A549 (cell line): ENCODE measurements at regions of chr15 and their contacts with region 1.

Region 1: GRCh38 chr15:64046347-64047153 is at the start of gene DAPK2:
- DNase-seq: peak; percentile 66 to 98
- ATAC-seq: peak; percentile 83 to 91
- H3K4me3 ChIP-seq: peak within 1 kb of the TSS; percentile 64
- H3K27ac ChIP-seq: peak within 1 kb of the TSS; percentile 73 to 94
- H3K4me1 ChIP-seq: peaks cover 33% of the 10 kb centered on the region
- CTCF ChIP-seq: peak; percentile 99
- EP300 ChIP-seq: no peak
- POLR2A ChIP-seq: peak; percentile 37; the same call in 1 of the 2 replicates
- RAD21 ChIP-seq: peak; percentile 63 to 95
- polyA plus RNA-seq, gene DAPK2: 4.2 and 4.8 TPM in 2 replicates

Region 2: DNA sequence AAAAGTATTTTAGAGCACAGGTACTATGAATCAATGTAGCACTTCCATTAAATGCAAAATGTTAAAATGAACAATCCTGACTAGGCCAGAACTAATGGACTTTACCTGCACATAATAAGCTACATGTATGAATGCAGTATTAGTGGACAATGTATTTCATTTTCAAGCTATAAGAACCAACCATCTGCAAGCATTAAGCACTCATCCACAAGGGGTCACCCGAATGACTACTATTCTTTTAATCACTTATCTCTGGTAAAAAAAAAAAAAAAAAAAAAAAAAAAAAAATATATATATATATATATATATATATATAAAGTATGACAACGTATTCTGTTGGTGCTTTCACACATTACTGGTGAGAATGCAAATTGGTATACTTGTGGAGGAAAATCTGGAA is 220.0 kb before region 1 on chr15:
- CTCF ChIA-PET with region 1: interaction called, 12 read pairs
- POLR2A ChIA-PET with region 1: no interaction called
- DNase-seq: peak in 1 of 2 experiments; percentile 62
- ATAC-seq: peak in 1 of 2 experiments; percentile 45; a peak in 1 of 6 replicates
- H3K4me3 ChIP-seq: no peak overlapping the region
- H3K27ac ChIP-seq: no peak overlapping the region
- H3K4me1 ChIP-seq: no peaks in the 10 kb centered on the region
- CTCF ChIP-seq: peak; percentile 22; the same call in 1 of the 3 replicates
- EP300 ChIP-seq: no peak
- POLR2A ChIP-seq: no peak
- RAD21 ChIP-seq: peak in 1 of 2 experiments; percentile 28; a peak in 2 of 5 replicates

Region 3: GRCh38 chr15:63891079-63891767 is 155.3 kb before region 1 on chr15:
- CTCF ChIA-PET with region 1: interaction called, 13 read pairs
- POLR2A ChIA-PET with region 1: no interaction called
- DNase-seq: peak; percentile 87 to 88
- ATAC-seq: peak; percentile 80 to 96
- H3K4me3 ChIP-seq: no peak overlapping the region
- H3K27ac ChIP-seq: no peak overlapping the region
- H3K4me1 ChIP-seq: peaks cover 3% of the 10 kb centered on the region; the same call in 2 of the 3 replicates
- CTCF ChIP-seq: peak; percentile 98
- EP300 ChIP-seq: no peak
- POLR2A ChIP-seq: no peak
- RAD21 ChIP-seq: peak; percentile 79 to 83

Region 4: GRCh38 chr15:63922261-63922904 is 124.2 kb before region 1 on chr15:
- CTCF ChIA-PET with region 1: interaction called, 37 read pairs
- POLR2A ChIA-PET with region 1: no interaction called
- DNase-seq: no peak
- ATAC-seq: no peak
- H3K4me3 ChIP-seq: no peak overlapping the region
- H3K27ac ChIP-seq: no peak overlapping the region
- H3K4me1 ChIP-seq: no peaks in the 10 kb centered on the region
- CTCF ChIP-seq: no peak
- EP300 ChIP-seq: no peak
- POLR2A ChIP-seq: no peak
- RAD21 ChIP-seq: no peak

Region 5: DNA sequence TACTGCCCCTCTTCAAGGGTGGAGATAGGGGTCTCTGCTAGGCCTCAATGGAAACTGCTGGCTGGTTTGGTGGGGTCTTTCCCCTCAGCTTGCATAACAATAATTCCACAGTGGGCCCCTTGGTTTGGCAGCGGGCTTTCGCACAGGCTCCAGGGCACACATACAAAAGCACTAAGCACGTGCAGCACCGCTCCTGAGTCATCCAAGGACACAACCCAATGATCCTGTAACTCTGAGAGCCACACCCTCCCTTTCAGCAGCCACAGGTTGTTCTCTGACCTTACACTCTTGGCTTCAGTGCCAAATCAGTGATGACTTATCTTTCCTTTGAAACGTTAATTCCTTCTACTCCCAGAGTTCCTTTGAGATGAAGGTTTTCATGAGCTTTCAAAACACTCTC is 42.0 kb before region 1 on chr15:
- CTCF ChIA-PET with region 1: interaction called, 26 read pairs
- POLR2A ChIA-PET with region 1: interaction called, 8 read pairs
- DNase-seq: peak; percentile 52 to 81
- ATAC-seq: peak; percentile 54 to 78; a peak in 5 of 6 replicates
- H3K4me3 ChIP-seq: no peak overlapping the region
- H3K27ac ChIP-seq: peak overlapping the region; percentile 23 to 43; a peak in 3 of 6 replicates
- H3K4me1 ChIP-seq: peaks cover 23% of the 10 kb centered on the region
- CTCF ChIP-seq: no peak
- EP300 ChIP-seq: no peak
- POLR2A ChIP-seq: no peak
- RAD21 ChIP-seq: no peak

Region 6: GRCh38 chr15:64029110-64029509 is 17.4 kb before region 1 on chr15:
- CTCF ChIA-PET with region 1: interaction called, 43 read pairs
- POLR2A ChIA-PET with region 1: no interaction called
- DNase-seq: no peak
- ATAC-seq: peak in 1 of 2 experiments; percentile 22; a peak in 2 of 6 replicates
- H3K4me3 ChIP-seq: no peak overlapping the region
- H3K27ac ChIP-seq: no peak overlapping the region
- H3K4me1 ChIP-seq: peaks cover 15% of the 10 kb centered on the region; the same call in 2 of the 3 replicates
- CTCF ChIP-seq: no peak
- EP300 ChIP-seq: no peak
- POLR2A ChIP-seq: no peak
- RAD21 ChIP-seq: no peak

Region 7: DNA sequence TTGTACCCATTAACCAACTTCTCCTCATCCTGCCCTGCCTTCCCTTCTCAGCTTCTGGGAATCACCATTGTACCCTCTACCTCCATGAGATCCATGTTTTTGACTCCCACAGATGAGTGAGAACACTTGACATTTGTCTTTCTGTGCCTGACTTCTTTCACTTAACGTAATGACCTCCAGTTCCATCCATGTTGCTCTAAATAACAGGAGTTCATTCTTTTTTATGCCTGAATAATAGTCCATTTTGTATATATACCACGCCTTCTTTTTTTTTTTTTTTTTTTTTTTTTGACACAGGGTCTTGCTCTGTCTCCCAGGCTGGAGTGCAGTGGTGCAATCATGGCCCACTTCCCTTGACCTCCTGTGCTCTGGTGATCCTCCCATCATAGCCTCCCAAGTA is 55.9 kb after region 1 on chr15:
- CTCF ChIA-PET with region 1: no interaction called
- POLR2A ChIA-PET with region 1: no interaction called
- DNase-seq: no peak
- ATAC-seq: no peak
- H3K4me3 ChIP-seq: no peak overlapping the region
- H3K27ac ChIP-seq: no peak overlapping the region
- H3K4me1 ChIP-seq: peaks cover 18% of the 10 kb centered on the region; the same call in 2 of the 3 replicates
- CTCF ChIP-seq: no peak
- EP300 ChIP-seq: no peak
- POLR2A ChIP-seq: no peak
- RAD21 ChIP-seq: no peak

Region 8: GRCh38 chr15:64180235-64180837 is 133.8 kb after region 1 on chr15:
- CTCF ChIA-PET with region 1: no interaction called
- POLR2A ChIA-PET with region 1: no interaction called
- DNase-seq: no peak
- ATAC-seq: no peak
- H3K4me3 ChIP-seq: no peak overlapping the region
- H3K27ac ChIP-seq: no peak overlapping the region
- H3K4me1 ChIP-seq: no peaks in the 10 kb centered on the region
- CTCF ChIP-seq: no peak
- EP300 ChIP-seq: no peak
- POLR2A ChIP-seq: no peak
- RAD21 ChIP-seq: no peak

Region 9: GRCh38 chr15:64237677-64238076 is 191.1 kb after region 1 on chr15:
- CTCF ChIA-PET with region 1: no interaction called
- POLR2A ChIA-PET with region 1: no interaction called
- DNase-seq: no peak
- ATAC-seq: no peak
- H3K4me3 ChIP-seq: no peak overlapping the region
- H3K27ac ChIP-seq: no peak overlapping the region
- H3K4me1 ChIP-seq: peaks cover 14% of the 10 kb centered on the region
- CTCF ChIP-seq: no peak
- EP300 ChIP-seq: no peak
- POLR2A ChIP-seq: no peak
- RAD21 ChIP-seq: no peak